GM18951 (cell line): ENCODE measurements at regions of chr2 and their contacts with region 1.

Region 1: DNA sequence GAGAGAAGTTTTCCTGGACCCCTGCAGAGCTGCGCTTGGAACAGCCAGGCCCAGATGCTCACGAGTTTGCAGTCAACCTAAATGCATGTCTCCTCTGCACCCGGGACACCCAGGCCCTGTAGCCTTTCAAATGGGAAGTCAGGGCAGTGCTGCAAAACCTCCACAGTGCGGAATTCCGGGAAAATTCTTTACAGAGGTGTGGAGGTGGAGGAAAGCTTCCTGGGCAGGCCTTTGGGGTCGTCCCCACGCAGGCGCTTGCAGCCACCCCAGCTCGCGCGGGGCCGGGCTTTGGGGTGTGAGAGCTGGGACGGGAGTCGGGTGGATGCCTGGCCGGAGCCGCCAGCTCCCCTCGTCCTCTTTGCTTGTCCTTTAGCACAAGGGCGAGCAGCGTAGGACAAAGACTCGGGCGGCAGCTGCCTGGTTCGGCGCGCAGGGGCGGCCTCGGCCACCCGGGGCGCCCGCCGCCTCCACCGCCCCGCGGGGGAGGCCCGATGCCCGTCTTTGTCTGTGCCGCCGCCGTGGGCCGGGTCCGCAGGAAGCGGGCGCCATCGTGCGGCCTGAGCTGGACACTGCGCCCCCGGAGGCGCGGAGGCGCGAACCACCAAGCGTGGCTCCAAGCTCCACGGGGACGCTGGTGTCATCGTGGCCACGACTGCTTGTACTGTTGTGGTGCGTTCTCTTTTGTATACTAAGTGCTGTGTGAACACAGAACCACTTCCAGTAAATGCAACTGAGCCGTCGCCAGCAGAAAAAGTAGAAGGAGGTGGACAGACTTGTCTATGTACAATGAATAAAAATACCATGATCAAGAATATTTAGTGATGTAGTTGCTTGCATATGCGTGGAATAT is 28.2 kb upstream of the BCL11A start:
- POLR2A ChIP-seq: no peak

Region 2: DNA sequence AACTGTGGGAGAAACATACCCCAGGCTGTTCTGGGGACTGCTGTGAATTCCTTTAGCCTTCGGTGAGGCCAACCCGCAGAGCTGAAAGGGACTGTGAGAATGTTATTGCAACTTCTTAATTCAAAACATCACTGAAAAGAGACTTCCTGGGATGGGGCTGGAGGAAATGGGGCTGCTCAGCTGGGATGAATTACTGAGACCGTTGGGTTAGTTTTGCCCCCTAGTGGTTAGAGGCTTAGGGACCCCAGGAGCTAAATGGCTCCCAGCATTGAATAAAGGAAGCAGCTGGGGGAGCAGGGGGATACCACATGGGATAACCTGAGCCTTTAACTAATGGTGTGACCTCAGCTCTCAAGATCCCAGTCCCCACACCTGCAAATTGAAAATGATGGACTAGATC is 1399.4 kb before region 1 on chr2:
- in situ Hi-C with region 1: loop called (anchors 25 kb)
- POLR2A ChIP-seq: no peak

Region 3: GRCh38 chr2:59301466-59302402 is 1279.9 kb before region 1 on chr2:
- in situ Hi-C with region 1: loop called (anchors 25 kb)
- POLR2A ChIP-seq: no peak

Region 4: DNA sequence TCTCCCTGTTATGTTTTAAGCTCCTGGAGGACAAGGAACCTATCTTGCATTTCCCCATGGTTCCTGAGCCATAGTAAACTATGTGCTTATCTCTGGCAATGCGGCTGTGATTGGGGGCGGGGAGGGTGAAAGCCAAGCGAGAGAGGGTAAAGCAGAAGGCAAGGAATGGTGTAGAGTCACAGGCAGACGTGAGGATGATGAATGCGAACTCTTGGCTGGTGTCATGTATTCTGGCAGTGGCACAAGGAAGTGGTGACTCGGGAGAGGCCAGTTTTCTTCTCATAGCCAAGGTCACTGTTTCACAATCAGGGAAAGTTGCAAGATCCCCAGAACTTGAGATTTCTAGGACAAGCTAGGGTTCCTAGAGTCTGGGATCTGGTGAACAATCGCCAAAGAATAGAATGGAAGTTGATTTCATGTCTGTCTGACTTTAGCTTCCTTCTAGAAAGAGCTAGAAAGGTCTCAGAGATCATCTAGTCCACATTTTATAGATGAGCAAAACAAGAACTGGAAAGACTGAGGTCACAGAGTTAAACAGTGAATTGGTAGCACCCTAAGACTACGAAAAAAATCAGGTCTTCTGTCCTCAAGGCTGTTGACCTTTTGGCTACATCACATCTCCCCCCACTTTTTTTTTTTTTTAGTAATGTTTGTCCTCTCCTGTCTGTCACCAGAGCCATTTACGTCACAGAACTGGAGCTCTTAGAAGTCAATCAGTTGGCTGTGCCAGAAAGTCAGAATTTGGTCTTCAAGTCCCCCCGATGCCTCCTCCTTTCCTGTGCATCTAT is 165.2 kb before region 1 on chr2:
- in situ Hi-C with region 1: no loop called
- POLR2A ChIP-seq: no peak